CD8-positive, alpha-beta T cell (primary cell): ENCODE measurements at regions of chr5 and their contacts with region 1.

Region 1: DNA sequence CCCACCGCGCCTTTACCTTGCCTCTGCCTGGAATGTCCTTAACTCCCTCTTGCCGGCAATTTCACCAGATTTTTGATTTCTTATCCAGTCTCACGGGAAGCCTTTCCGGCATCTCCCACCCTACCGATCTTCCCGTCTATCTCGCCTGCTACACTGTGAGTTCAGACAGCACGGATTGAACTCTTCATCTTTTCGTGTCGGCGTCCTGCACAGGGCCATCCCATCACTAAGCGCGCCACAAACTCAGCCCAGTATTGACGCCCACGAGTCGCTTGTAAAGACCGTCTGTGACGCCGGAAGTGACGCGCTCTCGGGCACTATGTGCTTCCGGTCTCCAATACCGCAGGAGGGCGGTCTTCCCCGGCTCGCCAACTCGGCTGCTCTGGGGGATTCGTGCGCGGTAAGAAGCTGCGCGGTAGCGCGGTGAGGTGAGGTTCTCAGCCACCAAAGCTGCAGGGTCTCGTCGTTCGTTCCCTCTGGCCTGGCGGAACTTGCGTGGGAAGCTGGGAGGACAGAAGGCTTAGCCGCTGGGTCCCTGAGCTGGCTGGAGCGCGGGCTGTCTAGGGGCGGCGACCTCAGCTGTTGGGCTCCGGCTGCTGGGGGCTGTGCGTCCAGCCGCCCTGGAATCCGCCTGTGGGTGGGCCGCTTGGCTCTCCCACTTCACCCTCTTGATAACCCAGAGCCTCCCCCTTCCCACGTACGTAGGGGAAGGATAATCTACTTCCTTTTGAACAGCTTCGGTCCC is at the start of gene ZCCHC9:
- DNase-seq: peak; percentile 85 to 98 (median 94)
- ATAC-seq: peak; percentile 87
- H3K4me3 ChIP-seq: peak within 1 kb of the TSS; percentile 75 to 91
- H3K4me3 Mint-ChIP-seq: peak within 1 kb of the TSS; percentile 93
- H3K27ac ChIP-seq: peak within 1 kb of the TSS; percentile 79 to 87
- H3K27ac Mint-ChIP-seq: peak within 1 kb of the TSS; percentile 97
- H3K4me1 ChIP-seq: peaks cover 31% of the 10 kb centered on the region
- H3K4me1 Mint-ChIP-seq: peaks cover 60% of the 10 kb centered on the region
- H3K27me3 ChIP-seq: no peaks in the 10 kb centered on the region
- H3K27me3 Mint-ChIP-seq: no peaks in the 10 kb centered on the region
- CTCF ChIP-seq: no peak
- total RNA-seq, gene ZCCHC9: 14.6 to 15.3 TPM

Region 2: DNA sequence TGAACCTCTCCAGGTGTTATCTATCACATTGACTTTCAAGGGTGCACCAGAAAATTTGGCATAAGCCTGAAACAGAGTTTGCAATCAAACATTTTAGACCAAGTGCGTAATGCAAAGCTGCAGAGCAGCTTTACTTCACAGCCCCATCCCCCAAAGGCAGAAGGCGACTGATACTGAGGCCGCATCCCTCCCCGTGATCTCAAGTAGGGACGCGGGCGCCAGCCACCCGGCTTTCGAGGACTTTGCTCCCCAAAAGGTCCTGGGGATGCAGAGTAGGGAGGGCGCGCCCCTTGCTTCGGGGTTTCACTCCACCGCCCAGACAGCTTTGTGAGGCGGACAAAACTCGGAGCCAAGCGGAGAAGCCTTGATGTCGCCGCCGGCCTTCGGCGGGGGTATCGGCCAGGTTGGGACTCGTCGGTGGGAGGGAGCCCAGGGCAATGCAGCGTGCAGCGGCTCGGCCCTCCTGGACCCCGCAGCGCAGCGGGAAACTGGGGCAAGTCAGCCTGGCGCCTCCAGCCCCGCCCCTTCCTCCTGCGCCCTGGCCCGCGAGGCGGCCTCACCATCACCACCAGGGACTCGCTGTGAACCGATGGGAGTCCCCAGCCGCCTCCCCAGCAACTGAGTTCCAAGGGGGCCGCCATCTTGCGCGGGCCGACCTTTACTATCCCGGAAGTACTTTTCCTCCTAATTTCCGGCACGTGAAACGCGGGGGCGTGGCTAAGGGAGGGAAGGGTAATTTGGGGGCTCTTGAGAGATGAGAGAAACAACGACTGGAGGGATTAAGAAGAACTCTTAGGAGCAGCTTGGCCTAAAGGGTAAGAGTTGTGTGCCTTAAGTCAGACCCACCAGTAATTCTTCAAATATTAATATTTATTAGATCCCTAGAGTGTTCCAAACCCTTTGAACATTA is 1310.6 kb before region 1 on chr5 and contains the start of gene MTX3:
- CTCF ChIA-PET with region 1: no interaction called
- POLR2A ChIA-PET with region 1: no interaction called
- intact Hi-C with region 1: loop called (anchors 5 to 10 kb)
- DNase-seq: peak; percentile 75 to 93 (median 89)
- ATAC-seq: peak; percentile 95
- H3K4me3 ChIP-seq: peak within 1 kb of the TSS; percentile 60 to 72
- H3K4me3 Mint-ChIP-seq: peak within 1 kb of the TSS; percentile 86
- H3K27ac ChIP-seq: peak within 1 kb of the TSS; percentile 51 to 70
- H3K27ac Mint-ChIP-seq: peak within 1 kb of the TSS; percentile 88
- H3K4me1 ChIP-seq: peaks cover 20% of the 10 kb centered on the region
- H3K4me1 Mint-ChIP-seq: peaks cover 32% of the 10 kb centered on the region
- H3K27me3 ChIP-seq: no peaks in the 10 kb centered on the region
- H3K27me3 Mint-ChIP-seq: peaks cover 11% of the 10 kb centered on the region
- CTCF ChIP-seq: no peak
- total RNA-seq, gene MTX3: 26.2 to 27.1 TPM

Region 3: GRCh38 chr5:81006947-81007636 is 294.4 kb before region 1 on chr5:
- CTCF ChIA-PET with region 1: no interaction called
- POLR2A ChIA-PET with region 1: no interaction called
- intact Hi-C with region 1: loop called (anchors 10 kb)
- DNase-seq: peak in 7 of 9 experiments; percentile 39 to 89 (median 61)
- ATAC-seq: peak; percentile 87
- H3K4me3 ChIP-seq: peak overlapping the region; percentile 41 to 46
- H3K4me3 Mint-ChIP-seq: peak overlapping the region; percentile 83
- H3K27ac ChIP-seq: peak overlapping the region; percentile 46 to 75
- H3K27ac Mint-ChIP-seq: peak overlapping the region; percentile 94
- H3K4me1 ChIP-seq: peaks cover 74% of the 10 kb centered on the region
- H3K4me1 Mint-ChIP-seq: peaks cover 86% of the 10 kb centered on the region
- H3K27me3 ChIP-seq: no peaks in the 10 kb centered on the region
- H3K27me3 Mint-ChIP-seq: no peaks in the 10 kb centered on the region
- CTCF ChIP-seq: no peak

Region 4: DNA sequence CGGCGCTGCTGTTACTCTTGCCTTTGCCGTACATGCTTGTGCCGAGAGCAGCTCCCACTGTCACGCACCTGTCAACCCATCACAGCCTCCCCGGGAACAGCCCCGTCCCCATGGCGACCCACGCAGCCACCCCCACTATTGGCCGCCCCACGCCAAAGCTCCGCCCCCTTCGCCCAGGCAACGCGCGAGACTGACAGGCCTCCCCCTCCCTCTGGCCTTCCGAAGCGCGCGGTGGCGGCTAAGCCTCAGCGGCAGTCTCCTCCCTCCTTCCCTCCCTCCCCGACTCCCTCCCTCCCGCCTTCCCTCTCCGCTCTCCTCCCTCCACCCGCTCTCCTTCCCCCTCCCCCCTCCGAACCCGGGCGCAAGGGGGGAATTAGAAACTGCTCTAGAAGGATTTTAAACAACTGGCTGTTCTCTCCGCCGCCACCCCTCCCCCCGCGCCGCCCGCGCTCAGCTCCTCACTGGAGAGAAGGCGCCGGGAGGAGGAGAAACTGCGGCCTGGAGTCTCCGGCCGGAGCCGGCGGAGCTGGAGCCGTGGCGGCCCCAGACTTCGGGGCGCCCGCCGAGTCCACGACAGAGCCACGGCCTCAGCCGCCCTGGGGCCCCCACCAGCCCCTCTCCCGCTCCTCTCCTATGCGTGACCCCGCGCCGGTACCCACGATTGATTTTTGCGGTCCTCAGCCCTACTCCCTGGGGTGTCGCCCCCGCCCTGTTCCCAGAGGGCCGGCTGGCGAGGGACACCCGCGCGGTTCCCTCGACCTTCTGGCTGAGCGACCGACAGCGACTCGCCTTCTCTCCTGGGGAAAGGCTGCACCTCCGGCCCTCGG is 449.8 kb after region 1 on chr5 and contains the start of gene SSBP2:
- CTCF ChIA-PET with region 1: no interaction called
- POLR2A ChIA-PET with region 1: no interaction called
- intact Hi-C with region 1: loop called in 1 of 2 experiments (anchors 10 kb)
- DNase-seq: peak; percentile 99 to 100 (median 99)
- ATAC-seq: peak; percentile 90
- H3K4me3 ChIP-seq: peak within 1 kb of the TSS; percentile 75 to 76
- H3K4me3 Mint-ChIP-seq: peak within 1 kb of the TSS; percentile 97
- H3K27ac ChIP-seq: peak within 1 kb of the TSS; percentile 76 to 84
- H3K27ac Mint-ChIP-seq: peak within 1 kb of the TSS; percentile 94
- H3K4me1 ChIP-seq: peaks cover 17% of the 10 kb centered on the region
- H3K4me1 Mint-ChIP-seq: peaks cover 33% of the 10 kb centered on the region
- H3K27me3 ChIP-seq: no peaks in the 10 kb centered on the region
- H3K27me3 Mint-ChIP-seq: no peaks in the 10 kb centered on the region
- CTCF ChIP-seq: no peak
- total RNA-seq, gene SSBP2: 21.7 to 22.5 TPM

Region 5: GRCh38 chr5:82165740-82166530 is 864.5 kb after region 1 on chr5:
- CTCF ChIA-PET with region 1: interaction called, 4 read pairs
- POLR2A ChIA-PET with region 1: no interaction called
- intact Hi-C with region 1: loop called in 1 of 2 experiments (anchors 10 kb)
- DNase-seq: peak in 7 of 9 experiments; percentile 1 to 76 (median 30)
- ATAC-seq: peak; percentile 99
- H3K4me3 ChIP-seq: no peak overlapping the region
- H3K4me3 Mint-ChIP-seq: no peak overlapping the region
- H3K27ac ChIP-seq: no peak overlapping the region
- H3K27ac Mint-ChIP-seq: no peak overlapping the region
- H3K4me1 ChIP-seq: no peaks in the 10 kb centered on the region
- H3K4me1 Mint-ChIP-seq: no peaks in the 10 kb centered on the region
- H3K27me3 ChIP-seq: no peaks in the 10 kb centered on the region
- H3K27me3 Mint-ChIP-seq: no peaks in the 10 kb centered on the region
- CTCF ChIP-seq: peak; percentile 78